Calu3 (cell line): ENCODE measurements at regions of chr4 and their contacts with region 1.

Region 1: DNA sequence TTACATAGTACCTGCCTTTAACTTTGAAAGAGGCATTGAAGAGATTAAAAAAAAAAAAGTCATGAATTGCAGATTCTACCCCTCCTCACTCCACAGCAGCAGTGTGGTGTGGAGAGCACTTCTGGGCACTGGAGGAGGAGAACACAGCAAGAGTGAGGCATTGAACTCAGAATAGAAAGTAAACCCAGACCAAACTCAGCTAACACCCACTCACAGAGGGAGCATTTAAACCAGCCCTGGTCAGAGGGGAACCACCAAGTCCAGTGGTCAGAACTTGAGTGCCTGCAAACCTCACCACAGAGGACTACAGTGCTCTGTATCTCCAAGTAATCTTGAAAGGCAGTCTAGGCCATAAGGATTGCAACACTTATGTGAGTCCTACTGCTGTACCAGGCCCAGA is 15.6 kb upstream of the UGT2A1 start:
- DNase-seq: no peak
- H3K4me3 Mint-ChIP-seq: no peak overlapping the region
- H3K27ac Mint-ChIP-seq: no peak overlapping the region
- H3K4me1 Mint-ChIP-seq: no peaks in the 10 kb centered on the region
- H3K27me3 Mint-ChIP-seq: no peaks in the 10 kb centered on the region
- CTCF ChIP-seq: no peak

Region 2: GRCh38 chr4:69689599-69689998 is 20.9 kb after region 1 on chr4:
- CTCF ChIA-PET with region 1: no interaction called
- intact Hi-C with region 1: no loop called
- DNase-seq: peak; percentile 9
- H3K4me3 Mint-ChIP-seq: no peak overlapping the region
- H3K27ac Mint-ChIP-seq: no peak overlapping the region
- H3K4me1 Mint-ChIP-seq: peaks cover 6% of the 10 kb centered on the region
- H3K27me3 Mint-ChIP-seq: no peaks in the 10 kb centered on the region
- CTCF ChIP-seq: peak; percentile 28

Region 3: GRCh38 chr4:70269674-70270073 is 601.0 kb after region 1 on chr4:
- CTCF ChIA-PET with region 1: no interaction called
- intact Hi-C with region 1: loop called (anchors 10 kb)
- DNase-seq: no peak
- H3K4me3 Mint-ChIP-seq: no peak overlapping the region
- H3K27ac Mint-ChIP-seq: no peak overlapping the region
- H3K4me1 Mint-ChIP-seq: peaks cover 8% of the 10 kb centered on the region
- H3K27me3 Mint-ChIP-seq: no peaks in the 10 kb centered on the region
- CTCF ChIP-seq: no peak